MCF 10A (cell line): ENCODE measurements at regions of chr19 and their contacts with region 1.

Region 1: GRCh38 chr19:4815426-4816201 is 15.9 kb downstream of the TICAM1 start:
- DNase-seq: peak; percentile 95
- H3K4me3 Mint-ChIP-seq: peak overlapping the region; percentile 29
- H3K27ac Mint-ChIP-seq: no peak overlapping the region
- H3K4me1 Mint-ChIP-seq: peaks cover 31% of the 10 kb centered on the region
- H3K27me3 Mint-ChIP-seq: no peaks in the 10 kb centered on the region
- CTCF ChIP-seq: no peak

Region 2: DNA sequence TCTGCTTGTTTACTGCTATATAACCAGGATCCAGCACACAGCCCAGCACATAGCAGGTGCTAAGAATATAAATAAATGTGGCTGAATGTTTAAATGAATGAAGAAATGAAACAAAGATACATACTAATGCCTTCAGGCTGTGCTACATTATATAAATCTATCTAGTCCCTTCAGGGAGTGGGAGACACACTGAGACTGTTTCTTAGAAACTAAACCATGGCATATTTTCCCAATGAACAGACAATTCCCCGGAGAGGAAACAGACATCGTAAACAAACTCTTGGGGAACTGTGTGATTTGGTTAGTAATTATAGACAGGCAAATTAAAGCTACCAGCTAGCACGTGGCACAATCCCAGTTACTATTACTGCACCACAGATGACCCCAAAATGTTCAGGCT is 33.8 kb before region 1 on chr19:
- CTCF ChIA-PET with region 1: no interaction called
- POLR2A ChIA-PET with region 1: no interaction called
- intact Hi-C with region 1: no loop called
- DNase-seq: no peak
- H3K4me3 Mint-ChIP-seq: no peak overlapping the region
- H3K27ac Mint-ChIP-seq: no peak overlapping the region
- H3K4me1 Mint-ChIP-seq: no peaks in the 10 kb centered on the region
- H3K27me3 Mint-ChIP-seq: peaks cover 13% of the 10 kb centered on the region
- CTCF ChIP-seq: no peak

Region 3: GRCh38 chr19:4803736-4804695 is 11.6 kb before region 1 on chr19:
- CTCF ChIA-PET with region 1: interaction called, 10 read pairs
- POLR2A ChIA-PET with region 1: interaction called, 7 read pairs
- intact Hi-C with region 1: no loop called
- DNase-seq: peak; percentile 70
- H3K4me3 Mint-ChIP-seq: no peak overlapping the region
- H3K27ac Mint-ChIP-seq: no peak overlapping the region
- H3K4me1 Mint-ChIP-seq: no peaks in the 10 kb centered on the region
- H3K27me3 Mint-ChIP-seq: no peaks in the 10 kb centered on the region
- CTCF ChIP-seq: peak; percentile 94

Region 4: GRCh38 chr19:4831304-4831978 is 15.8 kb after region 1 on chr19 and contains the start of gene TICAM1:
- CTCF ChIA-PET with region 1: interaction called, 20 read pairs
- POLR2A ChIA-PET with region 1: interaction called, 23 read pairs
- intact Hi-C with region 1: no loop called
- DNase-seq: peak; percentile 71
- H3K4me3 Mint-ChIP-seq: peak within 1 kb of the TSS; percentile 81
- H3K27ac Mint-ChIP-seq: peak within 1 kb of the TSS; percentile 94
- H3K4me1 Mint-ChIP-seq: peaks cover 9% of the 10 kb centered on the region
- H3K27me3 Mint-ChIP-seq: no peaks in the 10 kb centered on the region
- CTCF ChIP-seq: no peak
- total RNA-seq, gene TICAM1: 24.2 and 25.6 TPM in 2 replicates

Region 5: DNA sequence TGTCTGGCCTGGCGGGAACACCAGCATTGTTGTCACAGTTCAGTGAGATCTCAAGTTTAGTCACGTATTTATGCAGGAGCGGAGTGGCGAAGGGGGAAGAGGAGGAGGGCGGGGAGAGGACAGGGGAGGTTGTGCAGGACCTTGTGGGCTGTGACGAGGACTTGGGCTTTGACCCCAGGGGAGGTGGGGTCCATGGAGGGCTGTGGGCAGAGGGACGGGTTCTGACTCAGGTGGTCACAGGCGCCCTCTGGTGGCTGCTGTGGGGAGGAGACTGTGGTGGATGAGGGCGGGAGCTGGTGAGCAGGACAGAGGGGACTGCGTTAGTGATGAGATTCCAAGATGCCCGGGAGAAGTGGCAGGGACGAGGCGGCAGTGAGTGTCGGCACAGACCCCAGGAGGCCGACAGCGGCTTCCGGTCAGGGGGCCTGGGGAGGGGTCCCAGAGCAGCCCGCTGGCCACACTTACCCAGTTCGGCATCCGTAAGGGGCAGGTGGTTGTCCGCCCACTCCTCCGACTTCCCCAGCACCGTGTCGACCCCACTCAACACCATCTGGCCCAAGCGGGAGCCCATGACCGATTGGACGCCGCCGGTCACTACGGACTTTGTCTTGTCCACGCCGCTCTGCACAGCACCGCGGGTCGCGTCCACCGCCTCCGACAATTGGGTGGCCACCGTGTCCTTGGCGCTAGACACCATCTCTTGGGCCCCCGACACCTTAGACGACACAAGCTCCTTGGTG is 36.1 kb after region 1 on chr19:
- CTCF ChIA-PET with region 1: interaction called, 106 read pairs
- POLR2A ChIA-PET with region 1: interaction called, 4 read pairs
- intact Hi-C with region 1: no loop called
- DNase-seq: peak; percentile 56
- H3K4me3 Mint-ChIP-seq: no peak overlapping the region
- H3K27ac Mint-ChIP-seq: no peak overlapping the region
- H3K4me1 Mint-ChIP-seq: no peaks in the 10 kb centered on the region
- H3K27me3 Mint-ChIP-seq: no peaks in the 10 kb centered on the region
- CTCF ChIP-seq: peak; percentile 69

Region 6: DNA sequence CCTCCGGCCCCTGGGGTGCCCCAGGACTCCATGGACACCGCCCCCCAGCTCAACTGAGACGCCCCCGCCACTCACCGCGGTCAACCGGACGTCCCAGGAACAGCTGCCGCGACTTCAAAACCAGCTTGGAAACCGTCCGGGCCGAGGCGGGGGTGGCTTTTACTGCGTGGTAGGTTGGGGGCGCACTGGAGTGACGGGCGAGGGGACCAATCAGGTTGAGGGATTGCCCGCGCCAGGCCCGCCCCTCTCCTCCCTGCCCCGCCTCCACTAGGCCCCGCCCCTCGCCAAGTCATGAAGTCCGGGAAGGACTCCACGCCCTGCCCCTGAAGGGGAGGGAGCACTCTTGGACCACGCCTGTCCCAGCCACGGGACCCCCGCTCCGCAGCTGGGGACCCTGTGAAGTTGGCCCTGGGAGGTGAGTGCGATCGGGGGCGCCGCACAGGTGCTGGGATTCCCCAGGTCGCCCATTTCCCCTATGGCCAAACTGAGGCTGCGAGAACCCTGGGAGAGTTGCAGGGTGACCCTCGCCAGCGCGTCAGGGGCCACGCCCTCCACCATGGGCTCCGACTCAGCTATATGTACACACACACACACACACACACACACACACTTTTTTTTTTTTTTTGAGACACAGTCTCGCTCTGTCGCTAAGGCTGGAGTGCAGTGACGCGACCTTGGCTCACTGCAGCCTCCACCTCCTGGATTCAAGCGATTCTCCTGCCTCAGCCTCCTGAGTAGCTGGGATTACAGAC is 52.1 kb after region 1 on chr19 and contains the start of gene PLIN3:
- CTCF ChIA-PET with region 1: interaction called, 38 read pairs
- POLR2A ChIA-PET with region 1: interaction called, 12 read pairs
- intact Hi-C with region 1: loop called (anchors 5 kb)
- DNase-seq: peak; percentile 97
- H3K4me3 Mint-ChIP-seq: peak within 1 kb of the TSS; percentile 80
- H3K27ac Mint-ChIP-seq: peak within 1 kb of the TSS; percentile 90
- H3K4me1 Mint-ChIP-seq: peaks cover 10% of the 10 kb centered on the region
- H3K27me3 Mint-ChIP-seq: no peaks in the 10 kb centered on the region
- CTCF ChIP-seq: no peak
- total RNA-seq, gene PLIN3: 64.3 and 71.7 TPM in 2 replicates

Region 7: GRCh38 chr19:5031231-5032100 is 215.9 kb after region 1 on chr19:
- CTCF ChIA-PET with region 1: interaction called, 40 read pairs
- POLR2A ChIA-PET with region 1: no interaction called
- intact Hi-C with region 1: no loop called
- DNase-seq: peak; percentile 82
- H3K4me3 Mint-ChIP-seq: no peak overlapping the region
- H3K27ac Mint-ChIP-seq: no peak overlapping the region
- H3K4me1 Mint-ChIP-seq: no peaks in the 10 kb centered on the region
- H3K27me3 Mint-ChIP-seq: no peaks in the 10 kb centered on the region
- CTCF ChIP-seq: peak; percentile 95